ENCODE measurements at regions of chr7 and their contacts with region 1.

Region 1: DNA sequence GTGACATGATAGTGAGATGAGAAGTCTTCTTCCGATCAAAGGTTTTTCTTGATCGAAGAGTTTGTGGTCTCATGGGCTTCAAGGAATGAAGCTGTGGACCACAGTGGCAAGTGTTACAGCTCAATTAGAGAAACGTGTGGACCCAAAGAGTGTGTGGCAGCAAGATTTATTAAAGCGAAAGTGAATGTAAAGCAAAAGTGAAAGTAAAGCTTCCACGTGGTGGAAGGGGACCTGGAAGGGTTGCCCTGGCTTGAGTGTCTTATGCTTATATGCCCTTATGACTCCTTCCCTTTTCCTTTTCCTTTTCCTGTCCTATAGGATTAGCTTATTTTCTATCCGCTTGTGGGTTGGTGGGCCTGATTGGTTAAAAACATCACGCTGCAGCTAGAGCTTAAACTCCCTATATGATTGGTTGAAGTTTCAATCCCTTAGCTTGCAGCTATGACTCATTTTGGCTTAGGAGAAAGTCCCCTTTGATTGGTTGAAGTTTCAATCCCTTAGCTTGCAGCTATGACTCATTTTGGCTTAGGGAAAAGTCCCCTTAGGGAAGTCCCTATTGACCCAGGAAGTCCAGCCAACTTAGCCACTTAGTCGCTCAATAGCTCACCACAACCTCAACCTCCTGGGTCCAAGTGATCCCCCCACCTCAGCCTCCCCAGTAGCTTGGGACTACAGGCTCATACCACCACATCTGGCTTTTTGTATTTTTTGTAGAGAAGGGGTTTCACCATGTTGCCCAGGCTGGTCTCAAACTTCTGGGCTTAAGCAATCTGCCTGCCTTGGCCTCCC is 34.7 kb downstream of the MRPS24 start:
- DNase-seq: no peak
- CTCF ChIP-seq: no peak

Region 2: GRCh38 chr7:42931834-42932651 is 902.6 kb before region 1 on chr7 and contains the starts of genes MRPL32 and PSMA2:
- in situ Hi-C with region 1: loop called (anchors 25 kb)
- DNase-seq: peak; percentile 93
- CTCF ChIP-seq: no peak

Region 3: DNA sequence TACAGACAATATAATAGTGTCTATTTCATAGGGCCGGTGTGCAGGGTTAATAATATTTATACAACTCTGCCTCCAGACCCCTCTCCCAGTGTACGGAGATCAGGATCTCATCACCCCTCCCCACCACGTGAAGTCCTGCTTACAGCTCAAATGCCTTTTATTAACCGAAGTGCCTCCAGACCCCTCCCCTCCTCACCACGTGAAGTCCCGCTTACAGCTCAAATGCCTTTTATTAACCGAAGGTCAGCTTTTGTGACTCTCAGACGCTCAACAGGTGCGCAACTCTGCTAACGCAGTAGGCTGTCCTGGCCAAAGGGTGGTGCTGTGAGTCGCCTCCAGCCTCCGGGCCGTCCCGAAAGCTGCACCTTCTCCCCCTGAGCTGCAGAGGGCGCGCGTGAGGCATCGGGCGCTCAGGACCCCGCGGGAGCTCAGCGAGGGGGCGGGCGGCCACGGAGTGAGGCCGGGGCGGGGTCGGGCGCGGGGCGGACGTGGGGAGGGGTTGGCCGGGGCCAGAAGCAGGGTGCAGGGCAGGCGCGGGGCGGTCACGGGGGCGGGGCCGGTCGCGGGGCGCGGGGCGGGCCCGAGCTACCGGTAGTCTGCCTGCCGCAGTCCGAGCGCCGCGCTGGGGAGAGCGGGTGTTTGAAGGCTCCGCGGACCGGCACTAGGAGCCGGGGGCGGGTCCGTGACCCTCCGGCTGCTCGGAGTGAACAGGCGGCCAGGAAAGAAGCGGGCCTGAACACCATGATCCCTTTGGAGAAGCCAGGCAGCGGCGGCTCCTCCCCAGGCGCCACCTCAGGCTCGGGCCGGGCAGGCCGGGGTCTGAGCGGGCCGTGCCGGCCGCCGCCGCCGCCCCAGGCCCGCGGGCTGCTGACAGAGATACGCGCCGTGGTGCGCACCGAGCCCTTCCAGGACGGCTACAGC is 251.9 kb before region 1 on chr7 and contains the start of gene STK17A:
- in situ Hi-C with region 1: loop called (anchors 10 kb)
- DNase-seq: peak; percentile 95
- CTCF ChIP-seq: peak; percentile 100

Region 4: GRCh38 chr7:43735802-43736541 is 98.7 kb before region 1 on chr7:
- in situ Hi-C with region 1: loop called (anchors 10 kb)
- DNase-seq: peak; percentile 55
- CTCF ChIP-seq: no peak

Measured in GM13976 (cell line).